ENCODE measurements at regions of chr15 and their contacts with region 1.

Region 1: GRCh38 chr15:33963831-33964664 is 4.2 kb upstream of the CHRM5 start:
- DNase-seq: peak in 1 of 7 donors; percentile 23
- H3K4me3 ChIP-seq: no peak overlapping the region
- H3K27ac ChIP-seq: no peak overlapping the region
- H3K4me1 ChIP-seq: peaks cover 0 to 7% of the 10 kb centered on the region in 2 donors
- H3K27me3 ChIP-seq: no peaks in the 10 kb centered on the region
- CTCF ChIP-seq: peak; percentile 44 to 83 (median 68)
- POLR2A ChIP-seq: no peak

Region 2: DNA sequence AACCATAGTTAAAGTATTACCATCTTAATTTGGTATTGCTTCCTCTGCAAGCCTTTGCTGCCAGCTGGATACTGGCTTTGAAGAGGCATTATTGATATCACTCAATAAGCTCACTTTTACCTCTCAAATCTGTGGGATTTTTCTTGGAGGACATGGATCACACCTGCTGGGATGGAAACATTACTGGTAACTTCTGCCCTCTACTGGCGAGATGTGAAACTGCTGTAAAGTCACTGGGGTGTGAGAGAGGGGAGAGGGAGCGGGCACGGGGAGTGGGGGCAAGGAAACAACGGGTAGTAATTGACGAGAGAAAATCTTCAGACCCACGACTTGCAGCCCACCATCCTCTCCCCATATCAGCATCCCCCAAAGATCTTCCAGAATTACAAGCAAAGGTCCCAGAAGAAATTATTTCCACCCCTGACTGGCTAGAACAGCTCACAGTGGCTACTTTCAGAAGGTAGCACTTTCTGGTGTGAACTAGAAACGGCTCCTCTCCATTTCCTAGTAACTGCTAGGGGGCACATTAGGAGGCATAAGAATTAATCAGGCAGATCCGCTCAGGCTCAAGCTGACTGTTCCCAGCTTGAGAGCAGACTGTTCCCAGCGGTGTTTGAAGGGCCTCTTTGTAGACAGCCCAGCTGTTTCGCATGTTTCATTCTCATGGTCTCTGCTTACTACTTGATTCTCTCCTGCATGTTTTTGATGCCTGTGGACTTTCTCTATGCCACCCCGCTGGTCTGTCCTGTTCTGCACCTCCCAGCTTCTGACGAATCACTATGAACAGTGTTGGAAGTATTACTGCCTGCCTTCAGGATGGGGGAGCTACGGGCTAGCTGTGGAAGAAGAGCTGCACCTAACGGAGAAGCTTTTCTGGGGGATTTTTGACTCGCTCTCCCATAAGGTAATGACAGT is 226.1 kb before region 1 on chr15:
- intact Hi-C with region 1: loop called in 1 of 2 experiments (anchors 5 kb)
- DNase-seq: peak in 5 of 7 donors; percentile 25 to 51 (median 36)
- H3K4me3 ChIP-seq: no peak overlapping the region
- H3K27ac ChIP-seq: no peak overlapping the region
- H3K4me1 ChIP-seq: no peaks in the 10 kb centered on the region
- H3K27me3 ChIP-seq: no peaks in the 10 kb centered on the region
- CTCF ChIP-seq: peak; percentile 48 to 75 (median 60)
- POLR2A ChIP-seq: no peak

Region 3: GRCh38 chr15:33766389-33766788 is 197.7 kb before region 1 on chr15:
- intact Hi-C with region 1: loop called in 1 of 2 experiments (anchors 10 kb)
- DNase-seq: no peak
- H3K4me3 ChIP-seq: no peak overlapping the region
- H3K27ac ChIP-seq: no peak overlapping the region
- H3K4me1 ChIP-seq: no peaks in the 10 kb centered on the region
- H3K27me3 ChIP-seq: no peaks in the 10 kb centered on the region
- CTCF ChIP-seq: peak in 5 of 6 experiments; percentile 19 to 36 (median 26)
- POLR2A ChIP-seq: no peak

Region 4: DNA sequence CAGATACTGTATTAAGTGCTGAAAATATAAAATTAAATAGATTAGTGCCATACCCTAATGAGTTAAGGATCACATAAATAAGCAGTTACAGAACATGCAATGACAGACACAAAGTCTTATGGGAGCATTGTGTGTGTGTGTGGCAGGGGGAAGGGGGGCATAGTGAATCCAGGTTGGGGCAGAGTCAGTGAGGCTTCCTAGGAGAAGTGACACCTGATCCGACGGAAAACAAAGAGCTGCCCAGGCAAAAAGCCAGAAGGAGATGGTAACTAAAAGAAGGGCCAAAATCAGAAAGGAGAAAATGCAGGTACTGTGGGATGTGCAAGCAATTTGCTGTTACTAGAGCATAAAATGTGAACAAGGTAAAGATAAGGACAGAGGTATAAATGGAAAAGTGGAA is 75.9 kb before region 1 on chr15:
- intact Hi-C with region 1: loop called in 1 of 2 experiments (anchors 5 kb)
- DNase-seq: no peak
- H3K4me3 ChIP-seq: no peak overlapping the region
- H3K27ac ChIP-seq: no peak overlapping the region
- H3K4me1 ChIP-seq: no peaks in the 10 kb centered on the region
- H3K27me3 ChIP-seq: no peaks in the 10 kb centered on the region
- CTCF ChIP-seq: no peak
- POLR2A ChIP-seq: no peak